ENCODE measurements at regions of chr2 and their contacts with region 1.

Region 1: DNA sequence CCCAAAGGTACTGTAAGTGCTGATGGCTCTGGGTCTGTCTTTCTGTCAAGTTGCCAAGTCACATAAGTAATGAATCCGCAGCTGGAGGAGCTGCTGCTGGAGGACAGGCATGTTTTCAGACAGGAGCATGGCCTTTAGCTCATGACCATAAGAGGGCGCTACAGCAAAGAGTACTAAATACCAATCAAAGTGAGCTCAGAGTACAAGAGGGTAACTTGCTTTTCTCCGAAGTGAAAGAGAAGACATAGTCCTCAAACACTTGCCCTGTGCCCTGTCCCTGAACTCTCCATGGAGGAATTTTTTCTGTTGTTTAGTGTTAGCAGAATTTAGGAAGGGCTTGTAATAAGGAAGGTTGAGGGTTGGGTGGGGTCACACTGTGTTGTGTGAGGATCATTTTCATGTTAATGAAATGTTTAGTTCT is 58.0 kb upstream of the EML6 start:
- DNase-seq: peak in 2 of 5 donors; percentile 21 to 30
- H3K4me3 ChIP-seq: no peak overlapping the region
- H3K4me3 Mint-ChIP-seq: no peak overlapping the region
- H3K27ac ChIP-seq: no peak overlapping the region
- H3K27ac Mint-ChIP-seq: peak overlapping the region in 6 of 8 donors; percentile 1 to 83 (median 52)
- H3K4me1 ChIP-seq: no peaks in the 10 kb centered on the region
- H3K4me1 Mint-ChIP-seq: peaks cover 4 to 9% (median 5%) of the 10 kb centered on the region in 3 donors
- H3K27me3 ChIP-seq: no peaks in the 10 kb centered on the region
- H3K27me3 Mint-ChIP-seq: peaks cover 0 to 1% of the 10 kb centered on the region in 2 donors

Region 2: GRCh38 chr2:54522624-54523281 is 142.7 kb before region 1 on chr2:
- CTCF ChIA-PET with region 1: interaction called, 28 read pairs
- POLR2A ChIA-PET with region 1: no interaction called
- DNase-seq: peak; percentile 36 to 75 (median 68)
- H3K4me3 ChIP-seq: no peak overlapping the region
- H3K4me3 Mint-ChIP-seq: peak overlapping the region in 4 of 7 donors; percentile 23 to 57 (median 42)
- H3K27ac ChIP-seq: no peak overlapping the region
- H3K27ac Mint-ChIP-seq: peak overlapping the region in 5 of 8 donors; percentile 1 to 93 (median 64)
- H3K4me1 ChIP-seq: no peaks in the 10 kb centered on the region
- H3K4me1 Mint-ChIP-seq: peaks cover 4 to 9% (median 4%) of the 10 kb centered on the region in 3 donors
- H3K27me3 ChIP-seq: no peaks in the 10 kb centered on the region
- H3K27me3 Mint-ChIP-seq: peaks cover 2 to 13% of the 10 kb centered on the region in 2 donors

Region 3: GRCh38 chr2:54675738-54676137 is 10.3 kb after region 1 on chr2:
- CTCF ChIA-PET with region 1: interaction called, 11 read pairs
- POLR2A ChIA-PET with region 1: no interaction called
- DNase-seq: no peak
- H3K4me3 ChIP-seq: no peak overlapping the region
- H3K4me3 Mint-ChIP-seq: no peak overlapping the region
- H3K27ac ChIP-seq: no peak overlapping the region
- H3K27ac Mint-ChIP-seq: no peak overlapping the region
- H3K4me1 ChIP-seq: peaks cover 4% of the 10 kb centered on the region
- H3K4me1 Mint-ChIP-seq: peaks cover 10 to 30% (median 17%) of the 10 kb centered on the region in 3 donors
- H3K27me3 ChIP-seq: no peaks in the 10 kb centered on the region
- H3K27me3 Mint-ChIP-seq: peaks cover 0 to 4% of the 10 kb centered on the region in 2 donors

Measured in CD8-positive, alpha-beta memory T cell (primary cell).